HEK293T (cell line): ENCODE measurements at regions of chr12 and their contacts with region 1.

Region 1: GRCh38 chr12:123633379-123634141 is at the starts of genes EIF2B1 and GTF2H3:
- DNase-seq: peak; percentile 98

Region 2: GRCh38 chr12:123621619-123622530 is 11.7 kb before region 1 on chr12:
- CTCF ChIA-PET with region 1: no interaction called
- POLR2A ChIA-PET with region 1: interaction called, 11 read pairs
- DNase-seq: no peak

Region 3: GRCh38 chr12:123645878-123646277 is 12.3 kb after region 1 on chr12:
- CTCF ChIA-PET with region 1: no interaction called
- POLR2A ChIA-PET with region 1: no interaction called
- DNase-seq: no peak